GM10248 (cell line): ENCODE measurements at regions of chr1 and their contacts with region 1.

Region 1: GRCh38 chr1:180168786-180169639 is 14.3 kb downstream of the QSOX1 start:
- DNase-seq: peak; percentile 70
- CTCF ChIP-seq: peak; percentile 64

Region 2: DNA sequence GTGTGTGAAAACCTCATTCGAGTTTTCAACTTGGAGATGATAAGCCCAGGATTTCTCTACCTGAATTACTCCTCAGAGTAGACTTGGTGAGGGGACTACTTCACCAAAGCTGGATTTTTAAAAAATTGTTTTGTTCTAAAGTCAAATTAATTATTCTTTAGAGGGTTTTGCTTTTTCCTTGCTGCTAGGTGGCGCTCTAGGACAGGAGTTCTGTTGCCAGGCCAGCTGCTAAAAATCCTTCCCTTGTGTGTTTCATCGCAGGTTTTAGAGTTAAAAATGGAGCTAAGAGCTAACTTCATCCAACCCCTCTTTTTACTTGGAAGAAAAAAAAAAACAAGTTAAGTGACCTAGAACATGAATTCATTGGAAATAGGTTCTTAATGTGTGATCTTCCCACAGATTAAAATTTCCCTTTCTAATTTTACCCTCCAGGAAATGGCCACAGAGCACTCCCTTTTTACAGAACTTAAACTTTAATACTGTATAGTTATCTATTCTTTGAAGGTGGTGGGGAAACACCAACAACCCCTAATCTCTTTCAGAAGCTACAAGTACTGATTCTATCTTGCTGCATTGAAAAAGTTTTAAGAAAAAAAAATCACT is 462.6 kb before region 1 on chr1:
- CTCF ChIA-PET with region 1: interaction called, 13 read pairs
- POLR2A ChIA-PET with region 1: no interaction called
- DNase-seq: peak; percentile 51
- CTCF ChIP-seq: peak; percentile 70

Region 3: GRCh38 chr1:179867807-179868330 is 301.1 kb before region 1 on chr1:
- CTCF ChIA-PET with region 1: interaction called, 163 read pairs
- POLR2A ChIA-PET with region 1: no interaction called
- DNase-seq: peak; percentile 52
- CTCF ChIP-seq: peak; percentile 71

Region 4: DNA sequence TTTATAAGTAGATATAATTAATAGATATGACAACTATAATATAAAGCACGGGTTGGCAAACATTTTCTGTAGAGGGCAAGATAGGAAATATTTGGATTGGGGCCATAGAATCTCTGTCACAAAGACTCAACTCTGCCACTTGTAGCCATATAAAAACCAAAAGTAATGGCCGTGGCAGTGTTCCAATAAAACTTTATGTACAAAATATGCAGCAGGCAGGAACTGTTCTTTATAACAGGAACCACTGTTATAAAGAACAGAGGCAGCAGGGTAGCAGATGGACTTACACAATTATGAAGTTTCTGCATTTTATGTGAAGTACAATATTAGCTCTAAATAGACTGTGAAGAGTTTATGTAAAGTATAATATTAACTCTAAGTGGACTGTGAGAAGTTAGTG is 31.2 kb before region 1 on chr1:
- CTCF ChIA-PET with region 1: no interaction called
- POLR2A ChIA-PET with region 1: no interaction called
- DNase-seq: no peak
- CTCF ChIP-seq: no peak

Region 5: DNA sequence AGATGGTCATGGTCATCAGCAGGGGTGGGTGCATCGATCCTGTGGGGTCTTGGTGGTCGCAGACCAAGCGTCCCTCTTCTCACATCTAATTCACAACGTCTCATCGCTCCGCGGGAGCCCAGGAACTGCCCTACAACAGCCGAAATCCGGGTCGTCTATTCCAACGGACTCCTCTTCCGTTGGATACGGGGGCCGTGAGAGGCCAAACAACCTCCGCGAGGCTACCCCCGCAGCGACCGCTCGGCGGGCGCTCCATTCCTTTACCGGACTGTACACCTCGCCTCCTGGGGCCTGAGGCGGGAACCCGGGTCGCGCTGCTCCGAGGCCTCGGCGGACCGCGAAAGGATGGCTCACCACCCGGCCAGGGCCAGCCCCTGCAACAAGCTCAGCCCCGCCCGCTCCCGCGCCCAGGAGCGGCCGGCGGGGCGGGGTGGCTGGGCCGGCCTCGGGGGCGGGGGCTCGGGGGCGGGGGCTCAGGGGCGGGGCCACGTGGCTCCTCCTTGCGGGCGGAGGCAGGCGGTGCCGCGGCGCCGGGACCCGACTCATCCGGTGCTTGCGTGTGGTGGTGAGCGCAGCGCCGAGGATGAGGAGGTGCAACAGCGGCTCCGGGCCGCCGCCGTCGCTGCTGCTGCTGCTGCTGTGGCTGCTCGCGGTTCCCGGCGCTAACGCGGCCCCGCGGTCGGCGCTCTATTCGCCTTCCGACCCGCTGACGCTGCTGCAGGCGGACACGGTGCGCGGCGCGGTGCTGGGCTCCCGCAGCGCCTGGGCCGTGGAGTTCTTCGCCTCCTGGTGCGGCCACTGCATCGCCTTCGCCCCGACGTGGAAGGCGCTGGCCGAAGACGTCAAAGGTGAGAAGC is 14.5 kb before region 1 on chr1 and contains the start of gene QSOX1:
- CTCF ChIA-PET with region 1: interaction called, 47 read pairs
- POLR2A ChIA-PET with region 1: interaction called, 5 read pairs
- DNase-seq: peak; percentile 100
- CTCF ChIP-seq: no peak